Activated T-helper 1 cell treated with anti-CD3 and anti-CD28 coated beads, Interleukin-12 subunit alpha, Interleukin-12 subunit beta, Interleukin-2, Interleukin-4 antibody, amounts not matched to agents 30 ng/mL and 10 ng/mL and 1 ng/mL, durations not matched to agents 14 hours and 24 hours and 36 hours (primary cell): ENCODE measurements at regions of chr2 and their contacts with region 1.

Region 1: GRCh38 chr2:176085861-176086771 is 2.4 kb upstream of the EVX2 start:
- DNase-seq: no peak
- H3K4me3 Mint-ChIP-seq: no peak overlapping the region
- H3K27ac Mint-ChIP-seq: no peak overlapping the region
- H3K4me1 Mint-ChIP-seq: no peaks in the 10 kb centered on the region
- H3K27me3 Mint-ChIP-seq: peaks cover 91% of the 10 kb centered on the region

Region 2: DNA sequence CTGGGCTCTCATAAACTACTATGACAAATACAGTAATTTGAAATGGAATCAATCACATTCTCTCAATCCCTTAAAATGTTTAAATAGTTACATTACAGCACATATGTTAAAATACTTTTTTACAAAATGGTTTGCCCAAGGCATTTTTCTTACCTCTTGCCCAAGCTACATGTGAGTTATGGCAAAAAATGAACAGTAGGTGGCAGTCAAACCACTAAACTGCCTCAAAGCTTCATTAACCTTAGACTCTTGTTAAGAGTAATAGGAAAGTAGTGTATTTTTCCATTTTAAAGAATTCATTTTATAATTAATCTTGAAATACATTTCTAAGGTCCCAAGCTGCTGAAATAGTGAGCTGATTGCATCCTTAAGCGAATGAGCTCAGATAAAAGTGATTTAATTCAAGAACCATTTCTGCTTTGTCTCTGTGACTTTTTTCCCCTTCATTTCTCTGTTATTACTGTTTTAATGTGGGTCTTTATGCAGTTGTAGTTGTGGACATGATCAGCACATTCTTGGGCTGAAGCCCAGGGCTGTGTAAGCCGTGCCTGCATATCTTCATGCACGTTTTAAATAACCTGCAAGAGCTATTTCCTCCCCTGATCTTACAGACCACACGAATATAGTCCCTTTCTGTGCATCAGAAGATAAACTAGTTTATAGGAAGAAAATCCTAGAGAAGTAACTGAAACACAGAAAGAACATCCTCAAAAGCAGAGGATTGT is 395.8 kb before region 1 on chr2:
- intact Hi-C with region 1: loop called (anchors 2 kb)
- DNase-seq: peak; percentile 9
- H3K4me3 Mint-ChIP-seq: no peak overlapping the region
- H3K27ac Mint-ChIP-seq: no peak overlapping the region
- H3K4me1 Mint-ChIP-seq: no peaks in the 10 kb centered on the region
- H3K27me3 Mint-ChIP-seq: peaks cover 7% of the 10 kb centered on the region

Region 3: GRCh38 chr2:176110975-176111663 is 25.0 kb after region 1 on chr2:
- intact Hi-C with region 1: loop called (anchors 2 kb)
- DNase-seq: no peak
- H3K4me3 Mint-ChIP-seq: no peak overlapping the region
- H3K27ac Mint-ChIP-seq: peak overlapping the region; percentile 68
- H3K4me1 Mint-ChIP-seq: peaks cover 3% of the 10 kb centered on the region
- H3K27me3 Mint-ChIP-seq: peaks cover 68% of the 10 kb centered on the region